Left colon (tissue), 2 donors: ENCODE measurements at regions of chr17 and their contacts with region 1.

Region 1: GRCh38 chr17:781805-782731 is at the starts of genes GLOD4 and MRM3:
- DNase-seq: peak; percentile 85 to 95
- ATAC-seq: peak; percentile 96
- total RNA-seq, gene GLOD4: 80.8 to 99.0 TPM
- total RNA-seq, gene MRM3: 11.4 to 13.3 TPM

Region 2: GRCh38 chr17:869567-870525 is 87.8 kb after region 1 on chr17:
- intact Hi-C with region 1: no loop called
- DNase-seq: peak in 1 of 2 donors; percentile 49
- ATAC-seq: no peak

Region 3: DNA sequence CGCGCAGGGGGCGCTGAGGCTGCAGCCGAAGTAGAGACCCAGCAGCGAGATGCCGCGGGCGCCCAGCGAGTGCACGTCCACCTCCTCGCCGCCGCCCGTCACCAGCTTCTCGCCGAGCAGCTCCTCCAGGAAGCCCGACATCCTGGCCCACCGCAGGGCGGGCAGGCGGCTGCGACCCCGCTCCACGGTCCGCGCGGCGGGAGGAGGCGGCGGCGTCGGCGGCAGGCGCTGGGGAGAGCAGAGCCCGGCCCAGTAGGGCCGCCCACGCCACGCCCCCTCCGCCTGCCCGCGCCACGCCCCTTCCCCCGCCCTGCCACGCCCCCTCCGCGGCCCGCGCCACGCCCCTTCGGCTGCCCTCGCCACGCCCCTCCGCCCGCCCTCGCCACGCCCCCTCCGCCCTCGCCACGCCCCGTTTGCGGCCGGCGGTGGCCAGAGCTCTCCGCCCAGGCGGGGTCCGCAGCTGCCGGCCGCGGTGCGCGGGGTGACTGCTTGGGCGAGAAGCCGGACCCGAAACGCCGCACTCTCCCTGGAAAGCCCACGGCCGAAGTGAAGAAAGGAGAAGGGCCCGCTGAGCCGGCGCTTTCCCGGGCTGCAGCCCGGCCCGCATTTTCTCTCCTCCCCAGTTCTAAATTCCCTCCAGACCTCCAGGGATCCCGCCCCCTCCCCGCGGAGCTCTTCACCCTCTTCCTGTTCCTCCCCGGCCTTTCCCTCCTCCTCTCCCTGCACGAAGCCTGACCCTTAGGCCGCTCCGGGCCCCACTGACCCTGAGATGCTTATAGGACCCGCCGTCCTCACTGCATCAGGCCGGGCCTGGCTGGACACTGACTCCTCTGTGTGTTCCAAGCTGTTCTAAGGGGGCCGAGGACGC is 197.7 kb after region 1 on chr17 and contains the start of gene NXN:
- intact Hi-C with region 1: no loop called
- DNase-seq: peak; percentile 72 to 89
- ATAC-seq: peak; percentile 96
- total RNA-seq, gene NXN: 3.9 to 14.5 TPM

Region 4: DNA sequence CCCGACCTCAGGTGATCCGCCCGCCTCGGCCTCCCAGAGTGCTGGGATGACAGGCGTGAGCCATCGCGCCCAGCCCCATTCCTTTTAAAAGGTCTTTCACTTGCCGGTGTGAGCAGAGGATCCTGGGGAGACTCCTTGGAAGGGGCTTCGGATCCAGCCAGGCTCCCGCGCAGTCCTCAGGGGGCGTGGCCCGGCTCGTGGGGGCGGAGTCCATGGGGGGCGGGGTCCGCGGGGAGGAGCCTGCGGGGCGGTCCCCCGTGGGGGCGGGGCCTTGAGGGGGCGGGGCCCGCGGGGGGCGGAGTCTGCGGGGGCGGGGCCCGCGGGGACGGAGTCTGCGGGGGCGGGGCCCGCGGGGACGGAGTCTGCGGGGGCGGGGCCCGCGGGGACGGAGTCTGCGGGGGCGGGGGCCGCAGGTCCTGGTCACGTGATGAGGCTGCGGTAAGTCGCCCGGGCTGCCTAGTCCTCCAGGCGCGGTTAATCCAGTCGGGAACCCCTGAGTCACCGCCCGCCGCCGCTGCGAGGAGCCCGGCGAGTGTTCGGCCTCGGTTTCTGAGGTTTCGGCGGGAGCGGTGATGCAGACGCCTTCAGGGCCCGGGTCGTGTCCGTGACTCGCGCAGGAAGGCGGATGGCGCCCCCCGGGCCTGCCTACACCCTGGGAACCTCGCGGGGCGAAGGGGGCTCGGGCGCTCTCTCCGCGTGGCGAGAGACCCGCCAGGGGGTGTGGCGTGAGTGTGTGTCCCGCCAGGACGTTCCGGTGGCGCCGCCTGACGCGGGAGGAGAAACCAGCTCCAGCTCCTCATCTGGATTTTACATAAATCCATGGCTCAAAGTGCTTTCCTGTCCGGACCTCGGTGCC is 421.3 kb after region 1 on chr17:
- intact Hi-C with region 1: loop called in 1 of 2 experiments (anchors 10 kb)
- DNase-seq: peak; percentile 64 to 75
- ATAC-seq: peak; percentile 69